IMR-90 (cell line): ENCODE measurements at regions of chr7 and their contacts with region 1.

Region 1: DNA sequence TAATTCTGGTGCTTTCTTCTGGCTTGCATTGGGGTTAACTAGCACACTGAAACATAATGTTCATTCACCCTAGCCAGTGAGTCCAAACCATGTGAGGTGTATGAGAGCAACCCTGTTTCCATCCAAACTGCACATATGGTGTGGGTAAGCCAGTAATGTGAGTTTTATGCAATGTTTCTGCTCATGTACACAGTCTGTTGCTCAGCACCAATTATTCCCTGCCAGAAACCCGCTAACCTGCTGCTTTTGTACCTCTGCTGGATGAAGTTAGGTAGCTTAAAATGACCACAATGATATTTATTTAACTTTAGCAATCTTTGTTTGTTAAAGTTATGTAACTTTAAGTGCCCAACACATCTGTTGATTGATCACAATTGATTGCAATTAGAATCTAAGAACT is 93.7 kb upstream of the RPA3 start:
- DNase-seq: no peak
- ATAC-seq: no peak
- H3K4me3 ChIP-seq: no peak overlapping the region
- H3K27ac ChIP-seq: no peak overlapping the region
- H3K4me1 ChIP-seq: no peaks in the 10 kb centered on the region
- H3K27me3 ChIP-seq: no peaks in the 10 kb centered on the region
- CTCF ChIP-seq: no peak
- POLR2A ChIP-seq: no peak
- RAD21 ChIP-seq: no peak

Region 2: DNA sequence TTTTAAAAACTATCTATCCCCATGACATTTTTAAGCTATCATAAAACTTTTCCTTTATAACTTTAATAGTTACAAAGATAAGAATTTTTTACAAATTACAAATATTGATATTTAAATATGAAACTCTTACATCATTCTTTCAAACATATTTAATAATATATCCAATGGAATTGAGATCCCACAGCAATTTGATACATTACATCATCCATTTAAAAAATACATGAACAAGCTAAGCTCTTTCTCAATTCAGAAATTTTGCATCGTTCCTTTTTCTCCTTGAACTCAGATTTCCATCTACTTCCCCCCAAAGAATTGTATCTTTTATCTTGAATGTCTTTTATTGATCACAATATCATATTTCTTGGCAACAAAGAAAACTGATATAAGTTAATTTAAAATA is 38.0 kb after region 1 on chr7:
- CTCF ChIA-PET with region 1: no interaction called
- POLR2A ChIA-PET with region 1: interaction called, 13 read pairs
- dilution Hi-C with region 1: no loop called
- in situ Hi-C with region 1: no loop called
- intact Hi-C with region 1: no loop called
- DNase-seq: no peak
- ATAC-seq: no peak
- H3K4me3 ChIP-seq: no peak overlapping the region
- H3K27ac ChIP-seq: no peak overlapping the region
- H3K4me1 ChIP-seq: no peaks in the 10 kb centered on the region
- H3K27me3 ChIP-seq: no peaks in the 10 kb centered on the region
- CTCF ChIP-seq: no peak
- POLR2A ChIP-seq: no peak
- RAD21 ChIP-seq: no peak